Calu3 (cell line): ENCODE measurements at regions of chr17 and their contacts with region 1.

Region 1: DNA sequence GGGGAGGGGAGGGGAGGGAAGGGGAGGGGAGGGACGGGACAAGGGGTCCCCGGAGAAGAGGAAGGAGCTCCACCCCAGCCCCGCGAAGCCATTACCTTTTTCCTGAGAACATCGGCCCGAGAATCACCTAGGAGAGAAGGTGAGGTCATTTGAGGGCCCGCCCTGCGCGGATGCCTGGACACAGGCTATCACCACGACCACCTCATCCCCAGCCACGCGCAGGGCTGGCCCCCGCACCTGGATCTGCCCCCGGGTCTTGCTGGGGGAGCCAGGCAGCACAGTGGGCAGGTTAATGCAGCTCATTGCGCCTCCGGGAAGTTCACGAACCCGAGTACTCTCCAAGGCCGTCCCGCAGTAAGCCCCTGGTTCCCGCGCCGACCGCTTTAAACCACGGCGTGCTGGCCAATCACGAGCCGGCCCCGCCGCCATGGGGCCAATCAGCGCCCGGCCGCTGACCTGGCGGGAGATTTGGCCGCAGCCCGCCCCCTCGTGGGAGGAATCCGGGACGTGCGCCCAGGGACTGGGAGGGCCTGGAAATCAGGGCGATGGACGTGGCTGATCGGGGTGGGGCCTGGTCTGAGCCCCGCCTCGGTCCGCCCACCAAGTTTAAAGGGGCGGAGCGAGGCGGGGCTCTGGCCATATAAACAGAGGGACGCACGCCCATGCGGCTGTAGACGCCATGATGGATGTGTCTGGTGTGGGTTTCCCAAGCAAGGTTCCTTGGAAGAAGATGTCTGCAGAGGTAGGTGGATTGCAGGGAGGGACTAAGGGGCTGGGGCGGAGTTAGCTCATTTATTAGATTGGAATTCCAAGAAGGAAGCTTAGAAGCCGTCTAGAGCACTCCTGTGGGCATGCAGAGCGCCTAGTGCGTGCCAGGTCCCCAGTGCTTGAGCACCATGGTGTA is at the starts of genes AFMID and TK1:
- DNase-seq: peak; percentile 99
- H3K4me3 Mint-ChIP-seq: peak within 1 kb of the TSS; percentile 78
- H3K27ac Mint-ChIP-seq: peak within 1 kb of the TSS; percentile 66
- H3K4me1 Mint-ChIP-seq: peaks cover 23% of the 10 kb centered on the region
- H3K27me3 Mint-ChIP-seq: no peaks in the 10 kb centered on the region
- CTCF ChIP-seq: peak; percentile 76
- total RNA-seq, gene AFMID: 28.5 and 30.8 TPM in 2 replicates
- total RNA-seq, gene TK1: 89.7 and 95.3 TPM in 2 replicates

Region 2: DNA sequence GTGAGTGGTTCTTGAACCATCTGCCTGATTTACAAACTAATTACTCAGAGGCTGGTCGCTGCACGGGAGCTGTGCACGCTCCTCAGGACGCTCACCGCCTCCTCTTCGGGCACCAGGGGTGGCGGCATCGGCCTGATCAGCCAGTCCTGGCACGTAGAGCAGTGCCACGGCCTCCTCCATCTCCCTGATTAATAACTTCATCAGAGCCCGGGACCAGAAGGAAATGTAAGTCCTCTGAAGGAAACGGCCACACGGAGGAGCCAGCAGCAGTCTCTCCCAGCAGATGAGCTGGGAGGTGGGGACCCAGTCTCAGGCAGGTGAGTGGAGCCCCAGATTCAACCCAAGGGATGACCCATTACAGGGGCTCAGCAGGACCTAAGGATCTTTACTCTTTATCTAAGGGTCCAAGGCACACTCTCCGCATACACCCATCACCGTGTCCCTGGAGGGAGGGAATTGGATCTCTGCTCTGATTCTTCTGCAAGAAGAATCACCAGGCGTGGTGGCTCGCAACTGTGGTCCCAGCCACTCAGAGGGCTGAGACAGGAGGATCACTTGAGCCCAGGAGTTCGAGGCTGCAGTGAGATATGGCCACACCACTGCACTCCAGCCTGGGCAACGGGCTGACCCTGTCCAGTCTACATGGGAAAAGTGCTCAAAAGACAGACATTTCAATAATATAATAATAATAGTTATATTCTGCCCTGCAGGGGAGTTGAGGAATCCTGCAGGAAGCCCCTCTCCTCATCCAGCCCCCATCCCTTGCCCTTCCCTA is 679.6 kb before region 1 on chr17:
- CTCF ChIA-PET with region 1: no interaction called
- intact Hi-C with region 1: no loop called
- DNase-seq: no peak
- H3K4me3 Mint-ChIP-seq: no peak overlapping the region
- H3K27ac Mint-ChIP-seq: no peak overlapping the region
- H3K4me1 Mint-ChIP-seq: no peaks in the 10 kb centered on the region
- H3K27me3 Mint-ChIP-seq: no peaks in the 10 kb centered on the region
- CTCF ChIP-seq: no peak

Region 3: GRCh38 chr17:78112518-78113226 is 74.3 kb before region 1 on chr17:
- CTCF ChIA-PET with region 1: interaction called, 4 read pairs
- intact Hi-C with region 1: loop called (anchors 5 kb)
- DNase-seq: peak; percentile 89
- H3K4me3 Mint-ChIP-seq: no peak overlapping the region
- H3K27ac Mint-ChIP-seq: peak overlapping the region; percentile 2
- H3K4me1 Mint-ChIP-seq: peaks cover 8% of the 10 kb centered on the region
- H3K27me3 Mint-ChIP-seq: no peaks in the 10 kb centered on the region
- CTCF ChIP-seq: peak; percentile 97

Region 4: GRCh38 chr17:78147315-78147998 is 39.5 kb before region 1 on chr17:
- CTCF ChIA-PET with region 1: interaction called, 5 read pairs
- intact Hi-C with region 1: loop called (anchors 1 kb)
- DNase-seq: peak; percentile 81
- H3K4me3 Mint-ChIP-seq: no peak overlapping the region
- H3K27ac Mint-ChIP-seq: peak overlapping the region; percentile 48
- H3K4me1 Mint-ChIP-seq: peaks cover 65% of the 10 kb centered on the region
- H3K27me3 Mint-ChIP-seq: no peaks in the 10 kb centered on the region
- CTCF ChIP-seq: no peak